ENCODE measurements at regions of chr9 and their contacts with region 1.

Region 1: DNA sequence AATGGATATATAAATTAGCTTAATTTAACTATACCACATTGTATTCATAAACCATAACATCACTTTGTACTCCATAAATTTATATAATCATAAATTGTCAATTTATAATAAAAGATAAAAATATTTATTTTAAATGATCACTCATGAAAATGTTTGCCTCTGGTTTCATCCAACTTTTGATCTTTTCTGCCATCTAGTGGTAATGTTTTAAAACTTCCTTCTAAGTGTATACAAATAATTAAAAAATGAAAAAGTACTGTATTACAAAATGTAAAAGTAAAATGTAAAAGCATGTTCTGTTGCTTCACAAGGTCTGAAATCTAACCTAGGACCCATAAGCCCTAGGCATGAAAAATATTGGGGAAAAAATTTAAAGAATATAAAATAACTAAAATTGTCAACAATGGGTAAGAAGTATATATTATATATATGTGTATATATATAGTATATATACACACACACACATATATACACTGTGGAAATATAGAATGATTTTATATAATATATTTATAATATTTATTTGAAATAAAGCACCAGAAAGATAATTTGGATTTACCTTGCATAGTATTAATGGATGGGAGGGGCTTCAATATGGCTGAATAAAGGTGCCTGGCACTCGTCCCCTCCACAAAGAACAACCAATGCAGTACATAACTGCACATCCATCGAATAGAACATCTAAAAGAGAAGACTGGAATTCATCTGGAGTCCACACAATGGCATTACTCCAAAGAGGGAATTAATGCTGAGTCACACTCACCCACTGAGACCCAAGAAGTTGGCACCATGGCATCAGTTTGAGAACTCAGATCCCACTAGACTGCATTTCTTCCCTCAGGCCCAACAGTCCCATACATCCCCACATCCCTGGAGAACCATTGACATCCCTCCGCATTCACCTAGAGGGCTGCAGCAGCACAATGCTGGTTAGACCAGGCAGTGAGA is 32.5 kb downstream of the ANXA1 start:
- DNase-seq: no peak
- ATAC-seq: no peak
- H3K4me3 ChIP-seq: no peak overlapping the region
- H3K27ac ChIP-seq: no peak overlapping the region
- H3K4me1 ChIP-seq: peaks cover 0 to 19% (median 0%) of the 10 kb centered on the region in 9 donors
- H3K27me3 ChIP-seq: peaks cover 0 to 3% (median 0%) of the 10 kb centered on the region in 7 donors
- CTCF ChIP-seq: peak; percentile 41 to 76 (median 59)

Region 2: DNA sequence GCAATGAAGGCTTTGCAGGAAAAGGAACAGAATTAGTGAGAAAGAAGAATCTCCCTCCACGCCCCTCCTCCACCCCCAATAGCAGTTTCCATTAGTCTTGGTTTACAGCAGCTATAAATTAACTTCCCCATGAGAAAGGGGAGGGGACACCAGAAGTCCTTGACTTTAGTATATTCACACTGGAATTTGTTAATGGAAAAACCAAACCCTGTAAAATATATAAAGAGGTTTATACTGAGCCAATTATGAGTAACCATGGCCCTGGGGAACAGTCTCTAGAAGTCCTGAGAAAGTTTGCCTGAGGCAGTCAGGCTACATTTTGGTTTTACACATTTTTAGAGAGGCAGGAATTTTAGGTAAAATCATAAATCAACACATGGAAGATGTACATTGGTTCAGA is 319.9 kb before region 1 on chr9:
- intact Hi-C with region 1: loop called in 8 of 10 experiments (anchors 5 to 10 kb)
- DNase-seq: no peak
- ATAC-seq: no peak
- H3K4me3 ChIP-seq: no peak overlapping the region
- H3K27ac ChIP-seq: no peak overlapping the region
- H3K4me1 ChIP-seq: peaks cover 0 to 4% (median 0%) of the 10 kb centered on the region in 9 donors
- H3K27me3 ChIP-seq: no peaks in the 10 kb centered on the region
- CTCF ChIP-seq: no peak

Region 3: GRCh38 chr9:73038613-73039012 is 145.6 kb before region 1 on chr9:
- intact Hi-C with region 1: loop called in 1 of 10 experiments (anchors 10 kb)
- DNase-seq: peak; percentile 5 to 9
- ATAC-seq: peak in 7 of 8 donors; percentile 18 to 74 (median 52)
- H3K4me3 ChIP-seq: no peak overlapping the region
- H3K27ac ChIP-seq: no peak overlapping the region
- H3K4me1 ChIP-seq: peaks cover 0 to 21% (median 12%) of the 10 kb centered on the region in 9 donors
- H3K27me3 ChIP-seq: no peaks in the 10 kb centered on the region
- CTCF ChIP-seq: no peak

Region 4: GRCh38 chr9:73114058-73114457 is 70.1 kb before region 1 on chr9:
- intact Hi-C with region 1: loop called in 4 of 10 experiments (anchors 2 to 5 kb)
- DNase-seq: no peak
- ATAC-seq: no peak
- H3K4me3 ChIP-seq: no peak overlapping the region
- H3K27ac ChIP-seq: no peak overlapping the region
- H3K4me1 ChIP-seq: no peaks in the 10 kb centered on the region
- H3K27me3 ChIP-seq: no peaks in the 10 kb centered on the region
- CTCF ChIP-seq: no peak

Measured in heart right ventricle (tissue), 16 donors.